ENCODE measurements at regions of chr2 and their contacts with region 1.

Region 1: GRCh38 chr2:104620801-104621200 is 233.1 kb upstream of the POU3F3 start:
- DNase-seq: no peak
- ATAC-seq: no peak
- H3K4me3 ChIP-seq: no peak overlapping the region
- H3K27ac ChIP-seq: no peak overlapping the region
- H3K4me1 ChIP-seq: no peaks in the 10 kb centered on the region
- H3K27me3 ChIP-seq: no peaks in the 10 kb centered on the region
- CTCF ChIP-seq: no peak
- POLR2A ChIP-seq: no peak
- RAD21 ChIP-seq: no peak

Region 2: GRCh38 chr2:104673225-104673624 is 52.4 kb after region 1 on chr2:
- CTCF ChIA-PET with region 1: interaction called, 11 read pairs
- POLR2A ChIA-PET with region 1: no interaction called
- dilution Hi-C with region 1: no loop called
- in situ Hi-C with region 1: no loop called
- intact Hi-C with region 1: no loop called
- DNase-seq: no peak
- ATAC-seq: no peak
- H3K4me3 ChIP-seq: no peak overlapping the region
- H3K27ac ChIP-seq: no peak overlapping the region
- H3K4me1 ChIP-seq: no peaks in the 10 kb centered on the region
- H3K27me3 ChIP-seq: no peaks in the 10 kb centered on the region
- CTCF ChIP-seq: no peak
- POLR2A ChIP-seq: no peak
- RAD21 ChIP-seq: no peak

Measured in IMR-90 (cell line).